K562 (cell line): ENCODE measurements at regions of chr14 and their contacts with region 1.

Region 1: DNA sequence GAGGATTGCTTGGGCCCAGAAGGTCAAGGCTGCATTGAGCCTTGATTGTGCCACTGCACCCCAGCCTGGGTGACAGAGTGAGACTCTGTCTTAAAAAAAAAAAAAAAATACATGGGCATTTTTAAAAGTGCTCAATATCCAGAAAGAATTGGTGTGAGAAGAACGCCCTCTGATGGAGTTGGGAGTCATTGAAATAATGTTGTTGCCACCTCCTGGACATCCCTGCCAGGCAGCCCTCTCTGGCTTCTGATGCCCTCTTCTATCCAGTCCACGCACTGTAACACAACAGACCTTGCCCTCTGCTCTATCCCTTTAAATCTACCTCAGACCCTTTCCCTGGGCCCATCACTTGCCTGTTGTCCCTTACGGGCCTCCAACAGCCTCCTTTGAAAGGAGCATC is 4.9 kb downstream of the PTGDR start:
- DNase-seq: peak in 2 of 4 experiments; percentile 5 to 7
- ATAC-seq: 0 out of 3 replicates have a peak, but pooled peaks have one; percentile 25
- H3K4me3 ChIP-seq: no peak overlapping the region
- H3K27ac ChIP-seq: no peak overlapping the region
- H3K4me1 ChIP-seq: no peaks in the 10 kb centered on the region
- H3K27me3 ChIP-seq: peaks cover 0 to 18% of the 10 kb centered on the region in 2 experiments; a peak in 2 of 5 replicates
- CTCF ChIP-seq: peak; percentile 20 to 54 (median 46); a peak in 3 of 6 replicates
- EP300 ChIP-seq: no peak
- POLR2A ChIP-seq: no peak
- RAD21 ChIP-seq: peak in 1 of 2 experiments; percentile 24; a peak in 2 of 4 replicates

Region 2: DNA sequence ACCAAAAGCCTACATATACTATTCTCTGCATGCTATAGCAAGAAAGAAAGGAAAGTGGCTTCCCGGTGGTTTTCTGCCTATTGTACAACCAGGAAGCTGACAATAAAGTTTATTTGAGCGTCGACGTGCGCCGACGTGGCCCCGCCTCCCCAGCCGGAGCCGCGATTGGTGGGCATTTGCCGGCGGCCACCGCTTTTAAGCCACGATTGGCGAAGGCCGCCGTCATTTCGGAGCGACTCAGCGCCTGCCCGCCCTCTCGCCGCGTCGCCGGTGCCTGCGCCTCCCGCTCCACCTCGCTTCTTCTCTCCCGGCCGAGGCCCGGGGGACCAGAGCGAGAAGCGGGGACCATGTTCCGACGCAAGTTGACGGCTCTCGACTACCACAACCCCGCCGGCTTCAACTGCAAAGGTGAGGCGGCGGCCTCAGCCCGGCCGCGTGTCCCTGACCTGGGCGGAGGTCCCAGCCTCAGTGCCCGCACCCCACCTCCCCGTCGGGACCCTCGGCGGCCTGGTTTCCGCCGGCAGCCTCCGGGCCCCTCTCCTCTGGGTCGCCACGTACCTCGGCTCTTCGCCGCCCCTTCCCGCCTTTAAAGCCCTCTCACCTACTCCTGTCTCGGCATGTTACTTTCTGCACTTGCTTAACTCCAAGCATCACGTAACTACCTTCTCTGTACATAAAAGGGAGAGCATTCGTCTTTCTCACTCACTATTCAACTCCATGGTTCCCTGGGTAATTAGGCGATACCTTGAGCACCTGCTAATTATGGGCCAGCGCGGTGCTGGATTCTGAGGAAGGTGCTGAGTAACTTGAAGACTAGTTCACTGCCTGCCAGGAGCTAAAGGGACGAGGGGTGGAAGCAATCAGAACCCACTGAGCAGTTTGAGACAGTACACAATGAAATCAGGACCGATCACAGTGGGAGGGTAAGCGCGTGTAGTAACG is 282.8 kb before region 1 on chr14 and contains the start of gene RTRAF:
- CTCF ChIA-PET with region 1: no interaction called
- POLR2A ChIA-PET with region 1: no interaction called
- in situ Hi-C with region 1: no loop called
- intact Hi-C with region 1: loop called (anchors 10 kb)
- DNase-seq: peak; percentile 79 to 91 (median 84)
- ATAC-seq: peak; percentile 98
- H3K4me3 ChIP-seq: peak within 1 kb of the TSS; percentile 95
- H3K27ac ChIP-seq: peak within 1 kb of the TSS; percentile 80
- H3K4me1 ChIP-seq: no peaks in the 10 kb centered on the region; a peak in 1 of 5 replicates
- H3K27me3 ChIP-seq: no peaks in the 10 kb centered on the region
- CTCF ChIP-seq: no peak
- EP300 ChIP-seq: no peak
- POLR2A ChIP-seq: peak; percentile 77
- RAD21 ChIP-seq: no peak
- polyA plus RNA-seq, gene RTRAF: 140 to 150 TPM

Region 3: DNA sequence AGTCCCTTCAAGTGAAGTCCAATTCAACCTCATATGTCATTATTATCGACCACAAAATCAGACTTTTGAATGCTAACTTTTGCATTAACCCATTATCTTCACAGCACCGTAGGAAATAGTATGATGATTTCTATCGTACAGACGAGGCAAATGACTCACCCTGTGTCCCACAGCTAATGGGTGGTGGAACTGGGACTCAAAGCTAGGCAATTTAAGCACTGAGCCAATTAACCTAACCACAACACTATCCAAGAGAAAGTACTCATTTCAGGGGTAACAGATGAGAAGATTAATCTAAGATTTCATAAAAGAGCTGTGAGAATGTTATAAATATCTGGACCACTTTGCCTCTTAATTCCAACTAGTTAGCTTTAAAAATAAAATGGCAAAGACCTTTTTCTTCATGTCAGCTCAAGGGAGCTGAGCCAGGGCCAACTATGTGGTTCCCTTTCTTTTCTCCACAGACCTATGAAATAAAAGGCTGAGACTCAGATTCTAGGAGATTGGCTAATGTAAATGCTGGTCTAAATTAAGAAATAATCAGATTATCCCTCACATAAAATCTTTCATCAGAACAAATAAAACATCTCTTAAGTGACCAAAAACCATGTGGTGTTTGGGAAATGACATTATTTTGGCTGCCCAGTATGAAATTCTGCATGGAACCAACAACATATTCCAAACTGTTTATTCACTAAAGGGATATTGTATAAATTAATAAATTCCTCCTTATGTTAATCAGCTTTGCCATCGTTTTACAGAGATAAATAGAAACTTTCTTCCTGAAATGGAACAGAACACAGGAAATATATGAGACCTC is 46.7 kb after region 1 on chr14:
- CTCF ChIA-PET with region 1: no interaction called
- POLR2A ChIA-PET with region 1: no interaction called
- in situ Hi-C with region 1: no loop called
- intact Hi-C with region 1: no loop called
- DNase-seq: no peak
- ATAC-seq: no peak
- H3K4me3 ChIP-seq: no peak overlapping the region
- H3K27ac ChIP-seq: no peak overlapping the region
- H3K4me1 ChIP-seq: peaks cover 0 to 11% of the 10 kb centered on the region in 2 experiments; a peak in 2 of 5 replicates
- H3K27me3 ChIP-seq: peaks cover 0 to 17% of the 10 kb centered on the region in 2 experiments; a peak in 2 of 5 replicates
- CTCF ChIP-seq: no peak
- EP300 ChIP-seq: no peak
- POLR2A ChIP-seq: no peak
- RAD21 ChIP-seq: no peak